PC-3 (cell line): ENCODE measurements at regions of chr1 and their contacts with region 1.

Region 1: GRCh38 chr1:222739465-222739864 is 2.5 kb downstream of the FAM177B start:
- DNase-seq: no peak
- ATAC-seq: no peak
- H3K4me3 ChIP-seq: no peak overlapping the region
- H3K27ac ChIP-seq: no peak overlapping the region
- H3K4me1 ChIP-seq: peaks cover 17% of the 10 kb centered on the region
- H3K27me3 ChIP-seq: no peaks in the 10 kb centered on the region
- CTCF ChIP-seq: no peak

Region 2: DNA sequence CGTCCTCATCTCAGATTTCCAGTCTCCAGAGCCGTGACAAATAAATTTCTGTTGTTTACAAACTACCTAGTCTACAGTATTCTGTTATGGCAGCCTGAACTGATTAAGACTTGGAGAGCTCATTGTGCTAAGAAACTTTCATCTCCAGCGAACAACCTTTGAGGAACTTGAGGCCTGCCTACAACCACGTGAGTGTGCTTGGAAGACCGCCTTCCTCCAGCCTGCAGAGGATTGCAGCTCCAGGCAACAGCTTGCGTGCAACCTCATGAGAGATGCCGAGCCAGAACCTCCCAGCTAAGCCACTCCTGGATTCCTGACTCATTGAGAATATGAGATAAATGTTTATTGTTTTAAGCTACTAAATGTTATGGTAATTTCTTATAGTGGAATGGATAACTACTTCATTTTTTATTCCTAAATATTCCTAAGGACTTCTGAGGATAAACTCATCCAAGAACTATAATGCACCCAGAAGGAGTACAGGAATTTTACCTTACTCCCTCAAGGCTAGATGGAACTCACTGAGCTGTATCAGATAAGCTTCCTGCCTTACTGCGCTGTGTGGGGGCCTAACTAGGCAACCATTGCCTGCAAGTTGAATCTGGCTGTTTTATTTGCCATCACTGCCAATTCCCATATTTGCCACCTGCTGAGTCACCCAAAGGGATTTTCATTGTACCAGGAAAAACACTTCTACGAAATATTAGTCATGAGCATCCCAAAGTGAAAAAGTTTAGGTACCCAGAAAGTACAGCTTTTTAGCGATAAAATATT is 15.1 kb after region 1 on chr1:
- CTCF ChIA-PET with region 1: interaction called, 12 read pairs
- POLR2A ChIA-PET with region 1: interaction called, 3 read pairs
- intact Hi-C with region 1: no loop called
- DNase-seq: peak; percentile 99
- ATAC-seq: peak; percentile 98
- H3K4me3 ChIP-seq: 0 out of 2 replicates have a peak overlapping the region, but pooled peaks have one; percentile 0
- H3K27ac ChIP-seq: peak overlapping the region; percentile 85
- H3K4me1 ChIP-seq: peaks cover 21% of the 10 kb centered on the region
- H3K27me3 ChIP-seq: no peaks in the 10 kb centered on the region
- CTCF ChIP-seq: no peak

Region 3: DNA sequence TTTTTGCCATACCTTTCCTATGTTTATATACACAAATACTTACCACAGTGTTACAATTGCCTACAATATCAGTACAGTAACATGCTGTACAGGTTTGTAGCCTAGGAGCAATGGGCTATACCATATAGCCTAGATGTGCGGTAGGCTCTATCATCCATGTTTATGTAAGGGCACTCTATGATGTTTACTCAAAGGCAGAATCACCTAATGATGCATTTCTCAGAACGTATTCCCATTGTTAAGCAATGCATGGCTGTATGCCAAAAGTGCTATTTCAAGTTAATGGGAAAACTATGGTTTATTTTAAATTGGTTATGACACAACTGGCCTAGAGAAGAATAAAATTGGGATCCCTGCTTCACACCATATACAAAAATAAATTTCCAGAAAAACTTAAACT is 38.5 kb after region 1 on chr1:
- CTCF ChIA-PET with region 1: no interaction called
- POLR2A ChIA-PET with region 1: no interaction called
- intact Hi-C with region 1: loop called (anchors 2 kb)
- DNase-seq: peak; percentile 94
- ATAC-seq: peak; percentile 72
- H3K4me3 ChIP-seq: no peak overlapping the region
- H3K27ac ChIP-seq: peak overlapping the region; percentile 63
- H3K4me1 ChIP-seq: peaks cover 13% of the 10 kb centered on the region
- H3K27me3 ChIP-seq: no peaks in the 10 kb centered on the region
- CTCF ChIP-seq: no peak